T-cell (primary cell): ENCODE measurements at regions of chr5 and their contacts with region 1.

Region 1: GRCh38 chr5:67476531-67476930 is 279.9 kb upstream of the CD180 start:
- DNase-seq: peak in 1 of 35 experiments; percentile 9
- ATAC-seq: peak in 1 of 4 experiments; percentile 65
- H3K4me3 ChIP-seq: no peak overlapping the region
- H3K4me3 Mint-ChIP-seq: no peak overlapping the region
- H3K27ac ChIP-seq: no peak overlapping the region
- H3K27ac Mint-ChIP-seq: no peak overlapping the region
- H3K4me1 ChIP-seq: no peaks in the 10 kb centered on the region
- H3K4me1 Mint-ChIP-seq: peaks cover 0 to 13% (median 8%) of the 10 kb centered on the region in 3 donors
- H3K27me3 ChIP-seq: no peaks in the 10 kb centered on the region
- H3K27me3 Mint-ChIP-seq: peaks cover 4 to 6% of the 10 kb centered on the region in 2 donors

Region 2: DNA sequence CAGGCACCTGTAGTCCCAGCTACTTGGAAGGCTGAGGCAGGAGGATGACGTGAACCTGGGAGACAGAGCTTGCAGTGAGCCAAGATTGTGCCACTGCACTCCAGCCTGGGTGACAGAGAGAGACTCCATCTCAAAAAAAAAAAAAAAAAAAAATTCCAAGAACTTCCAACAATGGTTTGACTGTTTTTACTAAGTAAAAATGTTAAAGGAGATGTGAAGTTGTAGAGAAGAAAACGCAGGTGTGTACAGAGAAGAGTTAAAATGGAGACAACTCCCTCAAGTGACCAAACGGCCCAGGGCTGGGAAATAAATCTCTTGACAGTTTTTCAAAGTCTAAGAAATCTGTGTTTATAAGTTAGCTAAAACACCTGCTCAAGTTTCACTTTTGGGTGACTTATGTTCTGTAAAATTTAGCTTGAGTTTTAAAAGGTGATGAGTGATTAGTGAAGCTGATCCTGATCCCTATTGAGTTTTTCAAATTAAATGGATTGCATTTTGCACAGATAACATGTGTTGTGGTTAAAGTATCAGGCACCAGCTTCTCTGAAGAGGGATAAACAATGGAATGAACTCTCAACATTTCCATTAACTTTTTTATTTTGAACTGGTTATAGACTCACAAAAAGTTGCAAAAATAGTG is 24.8 kb before region 1 on chr5:
- CTCF ChIA-PET with region 1: no interaction called
- POLR2A ChIA-PET with region 1: interaction called in 1 of 2 experiments, 11 read pairs
- DNase-seq: no peak
- ATAC-seq: no peak
- H3K4me3 ChIP-seq: no peak overlapping the region
- H3K4me3 Mint-ChIP-seq: no peak overlapping the region
- H3K27ac ChIP-seq: no peak overlapping the region
- H3K27ac Mint-ChIP-seq: no peak overlapping the region
- H3K4me1 ChIP-seq: peaks cover 0 to 5% of the 10 kb centered on the region in 2 experiments
- H3K4me1 Mint-ChIP-seq: peaks cover 4 to 7% (median 5%) of the 10 kb centered on the region in 3 donors
- H3K27me3 ChIP-seq: no peaks in the 10 kb centered on the region
- H3K27me3 Mint-ChIP-seq: peaks cover 10 to 13% of the 10 kb centered on the region in 2 donors

Region 3: DNA sequence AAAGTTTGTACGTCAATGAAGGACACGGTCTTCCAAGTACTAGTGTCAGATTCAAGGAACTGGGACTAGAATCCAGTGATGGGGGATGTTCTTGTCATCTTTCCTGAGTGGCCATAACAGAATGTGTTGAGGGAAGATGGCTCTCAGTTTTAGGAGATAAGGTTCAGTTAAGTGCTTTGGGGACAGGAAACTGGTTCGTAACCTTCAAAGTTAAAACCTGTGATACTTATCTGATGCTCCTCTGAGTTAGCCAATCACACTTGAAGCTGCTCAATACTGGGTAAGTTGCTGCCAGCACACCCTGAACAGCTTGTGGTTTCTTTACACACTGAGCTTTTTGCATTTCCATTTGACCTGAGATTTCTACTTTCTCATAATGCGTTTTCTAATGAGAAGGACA is 803.5 kb after region 1 on chr5:
- CTCF ChIA-PET with region 1: no interaction called
- POLR2A ChIA-PET with region 1: interaction called in 1 of 2 experiments, 11 read pairs
- DNase-seq: peak in 32 of 35 experiments; percentile 24 to 88 (median 48)
- ATAC-seq: peak; percentile 93 to 97 (median 95)
- H3K4me3 ChIP-seq: peak overlapping the region; percentile 29 to 57
- H3K4me3 Mint-ChIP-seq: peak overlapping the region; percentile 85 to 88 (median 86)
- H3K27ac ChIP-seq: peak overlapping the region; percentile 84
- H3K27ac Mint-ChIP-seq: peak overlapping the region; percentile 98
- H3K4me1 ChIP-seq: peaks cover 46 to 49% of the 10 kb centered on the region in 2 experiments
- H3K4me1 Mint-ChIP-seq: peaks cover 86 to 91% (median 90%) of the 10 kb centered on the region in 3 donors
- H3K27me3 ChIP-seq: no peaks in the 10 kb centered on the region
- H3K27me3 Mint-ChIP-seq: no peaks in the 10 kb centered on the region